ENCODE measurements at regions of chr22 and their contacts with region 1.

Region 1: DNA sequence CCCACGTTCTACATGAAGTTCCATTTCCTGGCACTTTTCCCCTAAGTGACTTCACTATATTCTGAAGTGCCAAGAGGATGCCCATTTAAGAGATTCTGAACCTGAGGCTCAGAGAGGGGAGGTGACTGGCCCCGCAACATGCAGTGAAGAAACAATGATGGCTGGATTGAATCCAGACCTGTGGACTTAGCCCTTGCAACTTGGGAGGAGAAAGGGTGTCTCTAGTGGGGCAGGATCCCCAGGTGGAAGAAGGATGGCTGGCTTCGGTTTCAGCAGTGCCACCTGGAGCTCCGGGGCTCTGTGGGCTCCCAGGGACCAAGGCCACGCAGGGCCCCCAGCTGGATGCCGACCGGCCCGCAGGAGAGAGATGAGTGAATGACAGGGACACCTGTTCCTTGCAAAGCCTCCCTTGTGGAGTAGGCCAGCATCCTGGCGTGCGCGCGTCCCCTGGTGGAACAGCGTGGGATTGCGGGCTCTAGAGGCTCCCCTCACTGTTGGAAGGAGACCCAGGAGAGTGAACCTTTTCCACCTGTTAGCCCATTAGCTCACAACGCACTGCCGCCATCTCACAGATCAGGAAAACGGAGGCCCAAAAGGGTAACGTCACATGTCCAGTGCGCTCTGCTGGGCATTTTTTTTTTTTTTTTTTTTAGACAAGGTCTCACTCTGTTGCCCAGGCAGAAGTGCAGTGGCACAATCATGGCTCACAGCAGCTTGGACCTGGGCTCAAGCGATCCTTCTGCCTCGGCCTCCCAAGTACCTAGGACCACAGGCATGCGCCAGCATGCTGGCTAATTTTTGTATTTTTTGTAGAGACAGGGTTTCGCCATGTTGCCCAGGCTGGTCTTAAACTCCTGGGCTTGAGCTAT is 104.7 kb downstream of the KIAA1671 start:
- DNase-seq: no peak
- ATAC-seq: peak; percentile 94
- H3K4me3 ChIP-seq: no peak overlapping the region
- H3K27ac ChIP-seq: no peak overlapping the region
- H3K4me1 ChIP-seq: no peaks in the 10 kb centered on the region
- H3K27me3 ChIP-seq: no peaks in the 10 kb centered on the region; a peak in 1 of 4 replicates
- CTCF ChIP-seq: peak; percentile 91 to 99 (median 95)
- EP300 ChIP-seq: no peak
- POLR2A ChIP-seq: no peak
- RAD21 ChIP-seq: peak; percentile 68

Region 2: GRCh38 chr22:24685531-24686190 is 371.6 kb before region 1 on chr22:
- CTCF ChIA-PET with region 1: no interaction called
- POLR2A ChIA-PET with region 1: no interaction called
- RAD21 ChIA-PET with region 1: no interaction called
- SMC1A ChIA-PET with region 1: no interaction called
- in situ Hi-C with region 1: no loop called
- intact Hi-C with region 1: no loop called
- DNase-seq: no peak
- ATAC-seq: no peak
- H3K4me3 ChIP-seq: no peak overlapping the region
- H3K27ac ChIP-seq: no peak overlapping the region
- H3K4me1 ChIP-seq: no peaks in the 10 kb centered on the region
- H3K27me3 ChIP-seq: peaks cover 0 to 10% of the 10 kb centered on the region in 2 experiments; a peak in 1 of 4 replicates
- CTCF ChIP-seq: no peak
- EP300 ChIP-seq: no peak
- POLR2A ChIP-seq: no peak
- RAD21 ChIP-seq: no peak

Region 3: GRCh38 chr22:24938741-24939341 is 118.4 kb before region 1 on chr22:
- CTCF ChIA-PET with region 1: interaction called, 53 read pairs
- POLR2A ChIA-PET with region 1: no interaction called
- RAD21 ChIA-PET with region 1: interaction called, 5 read pairs
- SMC1A ChIA-PET with region 1: interaction called, 3 read pairs
- in situ Hi-C with region 1: no loop called
- intact Hi-C with region 1: no loop called
- DNase-seq: no peak
- ATAC-seq: peak; percentile 76
- H3K4me3 ChIP-seq: no peak overlapping the region
- H3K27ac ChIP-seq: no peak overlapping the region
- H3K4me1 ChIP-seq: no peaks in the 10 kb centered on the region
- H3K27me3 ChIP-seq: no peaks in the 10 kb centered on the region; a peak in 1 of 4 replicates
- CTCF ChIP-seq: peak; percentile 65 to 75 (median 74)
- EP300 ChIP-seq: no peak
- POLR2A ChIP-seq: no peak
- RAD21 ChIP-seq: peak; percentile 67

Region 4: GRCh38 chr22:24951942-24952836 is 105.1 kb before region 1 on chr22 and contains the start of gene KIAA1671:
- CTCF ChIA-PET with region 1: no interaction called
- POLR2A ChIA-PET with region 1: no interaction called
- RAD21 ChIA-PET with region 1: no interaction called
- SMC1A ChIA-PET with region 1: no interaction called
- in situ Hi-C with region 1: loop called (anchors 5 kb)
- intact Hi-C with region 1: no loop called
- DNase-seq: no peak
- ATAC-seq: peak; percentile 98
- H3K4me3 ChIP-seq: peak within 1 kb of the TSS; percentile 55
- H3K27ac ChIP-seq: no peak within 1 kb of the TSS
- H3K4me1 ChIP-seq: no peaks in the 10 kb centered on the region
- H3K27me3 ChIP-seq: peaks cover 0 to 4% of the 10 kb centered on the region in 2 experiments
- CTCF ChIP-seq: peak; percentile 72 to 88 (median 82)
- EP300 ChIP-seq: no peak
- POLR2A ChIP-seq: no peak
- RAD21 ChIP-seq: peak; percentile 30
- polyA plus RNA-seq, gene KIAA1671: 0.05 TPM

Region 5: GRCh38 chr22:25039754-25040153 is 17.5 kb before region 1 on chr22:
- CTCF ChIA-PET with region 1: no interaction called
- POLR2A ChIA-PET with region 1: no interaction called
- RAD21 ChIA-PET with region 1: no interaction called
- SMC1A ChIA-PET with region 1: no interaction called
- in situ Hi-C with region 1: no loop called
- intact Hi-C with region 1: no loop called
- DNase-seq: no peak
- ATAC-seq: no peak
- H3K4me3 ChIP-seq: no peak overlapping the region
- H3K27ac ChIP-seq: no peak overlapping the region
- H3K4me1 ChIP-seq: no peaks in the 10 kb centered on the region
- H3K27me3 ChIP-seq: peaks cover 0 to 2% of the 10 kb centered on the region in 2 experiments; a peak in 3 of 4 replicates
- CTCF ChIP-seq: no peak
- EP300 ChIP-seq: no peak
- POLR2A ChIP-seq: no peak
- RAD21 ChIP-seq: no peak

Region 6: DNA sequence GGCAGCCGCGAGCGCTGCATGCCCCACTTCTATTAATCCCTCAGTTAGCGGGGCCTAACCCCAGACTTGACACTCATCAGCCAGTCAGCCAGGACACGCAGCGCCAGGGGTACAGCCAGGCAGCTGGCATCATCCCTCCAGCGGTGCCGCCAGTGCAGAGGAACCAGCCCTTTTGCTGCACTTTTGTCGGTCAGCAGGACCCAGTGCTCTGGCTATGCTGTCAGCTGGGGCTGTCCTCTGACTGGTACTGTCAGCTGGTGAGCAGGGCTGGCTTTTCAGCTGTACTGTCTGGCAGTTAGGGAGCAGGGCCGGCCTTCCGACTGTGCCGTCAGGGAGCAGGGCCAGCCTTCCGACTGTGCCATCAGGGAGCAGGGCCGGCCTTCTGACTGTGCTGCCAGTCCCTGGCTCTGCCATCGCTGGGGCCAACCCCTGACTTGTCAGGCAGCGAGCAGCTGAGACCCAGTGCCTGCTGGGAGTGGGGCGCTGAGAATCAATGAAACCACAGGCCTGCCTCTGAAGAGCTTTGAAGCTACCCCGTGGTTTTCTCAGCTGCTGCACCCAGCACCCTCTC is 10.7 kb after region 1 on chr22:
- CTCF ChIA-PET with region 1: interaction called, 21 read pairs
- POLR2A ChIA-PET with region 1: no interaction called
- RAD21 ChIA-PET with region 1: interaction called, 6 read pairs
- SMC1A ChIA-PET with region 1: interaction called, 5 read pairs
- in situ Hi-C with region 1: no loop called
- intact Hi-C with region 1: no loop called
- DNase-seq: no peak
- ATAC-seq: peak; percentile 62
- H3K4me3 ChIP-seq: no peak overlapping the region
- H3K27ac ChIP-seq: no peak overlapping the region
- H3K4me1 ChIP-seq: peaks cover 25% of the 10 kb centered on the region
- H3K27me3 ChIP-seq: no peaks in the 10 kb centered on the region
- CTCF ChIP-seq: no peak
- EP300 ChIP-seq: no peak
- POLR2A ChIP-seq: no peak
- RAD21 ChIP-seq: no peak

Region 7: GRCh38 chr22:25076336-25076735 is 19.1 kb after region 1 on chr22:
- CTCF ChIA-PET with region 1: interaction called, 21 read pairs
- POLR2A ChIA-PET with region 1: no interaction called
- RAD21 ChIA-PET with region 1: interaction called, 5 read pairs
- SMC1A ChIA-PET with region 1: interaction called, 17 read pairs
- in situ Hi-C with region 1: no loop called
- intact Hi-C with region 1: no loop called
- DNase-seq: no peak
- ATAC-seq: peak; percentile 55
- H3K4me3 ChIP-seq: no peak overlapping the region
- H3K27ac ChIP-seq: peak overlapping the region; percentile 28; the same call in 1 of the 2 replicates
- H3K4me1 ChIP-seq: peaks cover 40% of the 10 kb centered on the region
- H3K27me3 ChIP-seq: no peaks in the 10 kb centered on the region
- CTCF ChIP-seq: no peak
- EP300 ChIP-seq: no peak
- POLR2A ChIP-seq: no peak
- RAD21 ChIP-seq: no peak